ENCODE measurements at regions of chr4 and their contacts with region 1.

Region 1: GRCh38 chr4:57575426-57575825 is 465.2 kb upstream of the IGFBP7 start:
- DNase-seq: no peak
- CTCF ChIP-seq: no peak

Region 2: GRCh38 chr4:57591073-57591472 is 15.6 kb after region 1 on chr4:
- CTCF ChIA-PET with region 1: interaction called, 11 read pairs
- POLR2A ChIA-PET with region 1: no interaction called
- DNase-seq: no peak
- CTCF ChIP-seq: no peak

Region 3: GRCh38 chr4:57633212-57633849 is 57.9 kb after region 1 on chr4:
- CTCF ChIA-PET with region 1: no interaction called
- POLR2A ChIA-PET with region 1: no interaction called
- DNase-seq: no peak
- CTCF ChIP-seq: no peak

Region 4: DNA sequence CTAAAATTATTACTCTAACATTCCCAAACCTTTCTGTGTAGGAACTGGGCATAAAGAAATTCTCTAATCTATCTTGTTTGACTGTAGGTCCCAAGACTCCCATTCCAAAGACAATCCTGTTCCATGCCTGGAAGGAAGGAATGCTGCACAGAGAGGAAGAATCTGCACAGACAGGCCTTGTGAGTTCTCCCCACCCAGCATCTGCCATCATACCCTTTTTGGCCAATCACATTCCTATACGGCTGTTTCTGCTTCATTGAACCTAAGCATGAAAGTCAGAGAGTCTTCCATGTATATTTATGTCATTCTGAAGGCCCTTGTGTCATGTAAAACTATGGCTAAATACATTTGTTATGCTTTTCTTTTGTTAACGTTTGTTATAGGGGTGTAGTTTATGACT is 202.4 kb after region 1 on chr4:
- CTCF ChIA-PET with region 1: no interaction called
- POLR2A ChIA-PET with region 1: no interaction called
- DNase-seq: no peak
- CTCF ChIP-seq: no peak